Endothelial cell of umbilical vein (primary cell): ENCODE measurements at regions of chr17 and their contacts with region 1.

Region 1: DNA sequence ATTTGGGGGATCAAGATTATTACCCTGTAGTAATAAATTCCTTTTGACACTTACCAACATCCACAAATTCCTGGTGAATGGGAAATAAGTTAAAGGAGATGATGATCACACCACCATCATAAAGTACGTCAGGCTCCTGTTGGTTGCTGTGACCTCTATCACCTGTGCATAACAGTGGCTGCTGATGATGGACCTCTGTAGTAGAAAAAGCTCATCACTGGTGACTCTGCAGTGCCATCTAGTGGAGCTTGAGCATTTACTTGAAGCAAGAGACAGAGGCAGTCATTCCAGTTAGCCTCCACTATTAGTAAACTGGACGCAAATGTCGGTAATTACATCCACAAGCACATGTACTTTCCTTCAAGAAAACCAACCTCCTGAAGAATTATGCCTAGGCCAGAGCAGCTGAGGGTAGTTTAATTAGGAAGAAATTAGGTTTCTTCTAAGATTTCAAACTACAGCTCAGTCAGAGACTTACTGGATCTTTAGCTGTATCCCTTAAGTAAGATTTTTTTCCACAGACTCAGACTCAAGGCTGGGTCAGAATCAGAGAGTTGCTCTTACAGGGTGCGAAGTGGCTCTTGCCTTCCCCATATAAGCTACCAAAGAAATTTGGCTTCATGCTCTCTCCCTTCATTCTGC is 39.3 kb downstream of the CYB561 start:
- DNase-seq: peak; percentile 87
- H3K4me3 ChIP-seq: no peak overlapping the region
- H3K27ac ChIP-seq: no peak overlapping the region
- H3K4me1 ChIP-seq: peaks cover 4% of the 10 kb centered on the region
- H3K27me3 ChIP-seq: no peaks in the 10 kb centered on the region
- CTCF ChIP-seq: peak; percentile 74 to 77
- POLR2A ChIP-seq: no peak

Region 2: GRCh38 chr17:62703775-62704378 is 702.9 kb before region 1 on chr17:
- CTCF ChIA-PET with region 1: interaction called, 11 read pairs
- POLR2A ChIA-PET with region 1: no interaction called
- dilution Hi-C with region 1: no loop called
- intact Hi-C with region 1: loop called (anchors 1 kb)
- DNase-seq: peak; percentile 44
- H3K4me3 ChIP-seq: peak overlapping the region; percentile 23 to 56 (median 48)
- H3K27ac ChIP-seq: peak overlapping the region; percentile 14
- H3K4me1 ChIP-seq: peaks cover 32% of the 10 kb centered on the region
- H3K27me3 ChIP-seq: peaks cover 0 to 8% of the 10 kb centered on the region in 2 experiments
- CTCF ChIP-seq: peak; percentile 79 to 87
- POLR2A ChIP-seq: no peak

Region 3: DNA sequence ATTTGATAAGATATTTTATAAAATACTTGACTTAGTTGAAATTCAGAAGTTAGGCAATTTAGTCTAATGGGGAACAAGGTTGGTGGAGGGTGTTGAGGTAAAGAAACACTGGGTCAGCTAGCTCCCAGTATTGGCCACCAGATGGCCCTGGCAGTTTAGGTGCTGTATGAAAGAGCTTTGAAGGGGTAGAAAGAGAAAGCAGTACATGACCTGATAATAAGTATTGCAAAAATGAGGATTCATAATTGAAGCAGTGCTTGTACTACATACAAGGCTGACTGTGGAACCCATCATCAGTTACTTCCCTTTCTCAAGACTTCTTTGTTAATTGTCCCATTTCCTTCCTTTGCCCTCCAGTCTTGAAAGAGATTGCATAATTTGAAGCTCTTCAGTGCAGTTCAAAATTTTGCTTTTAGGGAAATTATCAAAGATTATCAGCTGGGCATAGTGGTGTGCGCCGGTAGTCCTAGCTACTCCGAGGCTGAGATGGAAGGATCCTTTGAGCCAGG is 411.4 kb before region 1 on chr17:
- CTCF ChIA-PET with region 1: interaction called, 136 read pairs
- POLR2A ChIA-PET with region 1: no interaction called
- dilution Hi-C with region 1: no loop called
- intact Hi-C with region 1: loop called (anchors 1 kb)
- DNase-seq: peak; percentile 45
- H3K4me3 ChIP-seq: no peak overlapping the region
- H3K27ac ChIP-seq: no peak overlapping the region
- H3K4me1 ChIP-seq: peaks cover 2% of the 10 kb centered on the region
- H3K27me3 ChIP-seq: no peaks in the 10 kb centered on the region
- CTCF ChIP-seq: peak; percentile 46 to 57
- POLR2A ChIP-seq: no peak

Region 4: DNA sequence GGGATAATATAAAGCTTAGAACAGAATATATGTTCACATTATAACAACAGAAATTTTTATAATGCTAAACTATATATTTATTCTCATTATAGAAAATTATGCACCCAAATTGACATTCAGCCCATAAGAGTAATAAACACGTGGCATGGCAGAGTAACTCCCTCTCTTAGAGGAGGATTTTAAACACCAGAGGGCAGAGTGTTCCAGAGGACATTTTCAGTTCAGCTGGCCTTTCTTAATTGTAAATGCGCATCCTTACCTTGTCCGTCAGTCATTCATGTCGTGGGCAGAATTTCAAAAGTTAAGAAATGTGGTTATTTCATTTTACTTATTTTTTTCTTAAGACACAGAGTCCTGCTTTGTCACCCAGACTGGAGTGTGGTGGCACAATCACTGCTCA is 293.6 kb before region 1 on chr17:
- CTCF ChIA-PET with region 1: interaction called, 20 read pairs
- POLR2A ChIA-PET with region 1: no interaction called
- dilution Hi-C with region 1: no loop called
- intact Hi-C with region 1: loop called (anchors 1 kb)
- DNase-seq: no peak
- H3K4me3 ChIP-seq: no peak overlapping the region
- H3K27ac ChIP-seq: no peak overlapping the region
- H3K4me1 ChIP-seq: no peaks in the 10 kb centered on the region
- H3K27me3 ChIP-seq: no peaks in the 10 kb centered on the region
- CTCF ChIP-seq: no peak
- POLR2A ChIP-seq: no peak

Region 5: GRCh38 chr17:63381101-63381729 is 25.6 kb before region 1 on chr17:
- CTCF ChIA-PET with region 1: interaction called, 11 read pairs
- POLR2A ChIA-PET with region 1: no interaction called
- dilution Hi-C with region 1: no loop called
- intact Hi-C with region 1: no loop called
- DNase-seq: no peak
- H3K4me3 ChIP-seq: no peak overlapping the region
- H3K27ac ChIP-seq: no peak overlapping the region
- H3K4me1 ChIP-seq: peaks cover 4% of the 10 kb centered on the region
- H3K27me3 ChIP-seq: no peaks in the 10 kb centered on the region
- CTCF ChIP-seq: no peak
- POLR2A ChIP-seq: no peak

Region 6: DNA sequence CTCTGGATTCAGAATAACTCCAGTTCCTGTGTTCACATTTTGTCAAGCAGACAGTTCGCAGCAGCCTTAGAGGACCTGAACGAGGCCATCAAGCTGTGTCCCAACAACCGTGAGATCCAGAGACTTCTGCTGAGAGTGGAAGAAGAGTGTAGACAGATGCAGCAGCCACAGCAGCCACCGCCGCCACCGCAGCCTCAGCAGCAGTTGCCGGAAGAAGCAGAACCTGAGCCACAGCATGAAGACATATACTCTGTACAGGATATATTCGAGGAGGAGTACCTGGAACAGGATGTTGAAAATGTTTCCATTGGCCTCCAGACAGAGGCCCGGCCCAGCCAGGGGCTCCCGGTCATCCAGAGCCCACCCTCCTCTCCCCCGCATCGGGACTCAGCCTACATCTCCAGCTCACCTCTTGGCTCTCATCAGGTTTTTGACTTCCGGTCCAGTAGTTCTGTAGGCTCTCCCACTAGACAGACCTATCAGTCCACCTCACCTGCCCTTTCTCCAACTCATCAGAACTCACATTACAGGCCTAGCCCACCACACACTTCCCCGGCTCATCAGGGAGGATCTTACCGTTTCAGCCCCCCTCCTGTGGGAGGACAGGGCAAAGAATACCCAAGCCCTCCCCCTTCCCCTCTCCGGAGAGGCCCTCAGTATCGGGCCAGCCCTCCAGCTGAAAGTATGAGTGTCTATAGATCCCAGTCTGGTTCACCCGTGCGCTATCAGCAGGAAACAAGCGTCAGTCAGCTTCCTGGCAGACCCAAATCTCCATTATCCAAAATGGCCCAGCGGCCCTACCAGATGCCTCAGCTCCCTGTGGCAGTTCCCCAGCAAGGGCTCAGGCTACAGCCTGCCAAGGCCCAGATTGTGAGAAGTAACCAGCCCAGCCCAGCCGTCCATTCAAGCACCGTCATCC is 13.4 kb after region 1 on chr17:
- CTCF ChIA-PET with region 1: interaction called, 71 read pairs
- POLR2A ChIA-PET with region 1: no interaction called
- dilution Hi-C with region 1: no loop called
- intact Hi-C with region 1: no loop called
- DNase-seq: peak; percentile 97
- H3K4me3 ChIP-seq: no peak overlapping the region
- H3K27ac ChIP-seq: peak overlapping the region; percentile 61
- H3K4me1 ChIP-seq: peaks cover 33% of the 10 kb centered on the region
- H3K27me3 ChIP-seq: no peaks in the 10 kb centered on the region
- CTCF ChIP-seq: no peak
- POLR2A ChIP-seq: peak; percentile 65